WTC11 (cell line): ENCODE measurements at regions of chr11 and their contacts with region 1.

Region 1: GRCh38 chr11:62081378-62082291 is 42.2 kb upstream of the INCENP start:
- DNase-seq: peak; percentile 89
- ATAC-seq: peak; percentile 89
- H3K4me3 Mint-ChIP-seq: no peak overlapping the region
- H3K27ac Mint-ChIP-seq: no peak overlapping the region
- H3K4me1 Mint-ChIP-seq: no peaks in the 10 kb centered on the region; the same call in 1 of the 2 replicates
- H3K27me3 Mint-ChIP-seq: no peaks in the 10 kb centered on the region; the same call in 1 of the 2 replicates
- CTCF ChIP-seq: peak; percentile 84

Region 2: GRCh38 chr11:61816736-61817455 is 264.7 kb before region 1 on chr11 and contains the start of gene FADS1:
- CTCF ChIA-PET with region 1: interaction called, 18 read pairs
- POLR2A ChIA-PET with region 1: no interaction called
- DNase-seq: peak; percentile 90
- ATAC-seq: peak; percentile 32
- H3K4me3 Mint-ChIP-seq: peak within 1 kb of the TSS; percentile 94
- H3K27ac Mint-ChIP-seq: peak within 1 kb of the TSS; percentile 99
- H3K4me1 Mint-ChIP-seq: peaks cover 23% of the 10 kb centered on the region
- H3K27me3 Mint-ChIP-seq: no peaks in the 10 kb centered on the region; the same call in 1 of the 2 replicates
- CTCF ChIP-seq: no peak
- total RNA-seq, gene FADS1: 105 to 108 TPM (median 105 TPM) in 3 replicates

Region 3: DNA sequence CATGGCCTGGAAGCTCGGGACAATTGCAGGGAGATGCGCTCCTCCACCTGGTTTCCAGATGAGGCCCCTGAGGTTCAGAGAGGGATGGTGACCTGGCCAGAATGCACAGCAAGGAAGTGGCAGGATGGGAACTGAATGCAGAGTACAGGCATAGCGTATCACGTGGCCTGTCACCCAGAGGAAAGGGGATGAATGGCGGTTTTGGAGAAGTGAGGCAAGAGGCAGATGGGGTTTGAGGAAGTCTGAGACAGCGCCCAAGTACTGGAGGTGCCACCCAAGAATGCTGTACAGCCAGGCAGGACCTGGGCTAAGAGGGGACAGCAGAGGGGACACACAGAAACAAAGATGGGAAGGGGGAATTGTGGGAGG is 169.1 kb before region 1 on chr11:
- CTCF ChIA-PET with region 1: interaction called, 27 read pairs
- POLR2A ChIA-PET with region 1: no interaction called
- DNase-seq: peak; percentile 2
- ATAC-seq: no peak
- H3K4me3 Mint-ChIP-seq: no peak overlapping the region
- H3K27ac Mint-ChIP-seq: no peak overlapping the region; the same call in 1 of the 2 replicates
- H3K4me1 Mint-ChIP-seq: peaks cover 19% of the 10 kb centered on the region
- H3K27me3 Mint-ChIP-seq: peaks cover 17% of the 10 kb centered on the region
- CTCF ChIP-seq: no peak

Region 4: DNA sequence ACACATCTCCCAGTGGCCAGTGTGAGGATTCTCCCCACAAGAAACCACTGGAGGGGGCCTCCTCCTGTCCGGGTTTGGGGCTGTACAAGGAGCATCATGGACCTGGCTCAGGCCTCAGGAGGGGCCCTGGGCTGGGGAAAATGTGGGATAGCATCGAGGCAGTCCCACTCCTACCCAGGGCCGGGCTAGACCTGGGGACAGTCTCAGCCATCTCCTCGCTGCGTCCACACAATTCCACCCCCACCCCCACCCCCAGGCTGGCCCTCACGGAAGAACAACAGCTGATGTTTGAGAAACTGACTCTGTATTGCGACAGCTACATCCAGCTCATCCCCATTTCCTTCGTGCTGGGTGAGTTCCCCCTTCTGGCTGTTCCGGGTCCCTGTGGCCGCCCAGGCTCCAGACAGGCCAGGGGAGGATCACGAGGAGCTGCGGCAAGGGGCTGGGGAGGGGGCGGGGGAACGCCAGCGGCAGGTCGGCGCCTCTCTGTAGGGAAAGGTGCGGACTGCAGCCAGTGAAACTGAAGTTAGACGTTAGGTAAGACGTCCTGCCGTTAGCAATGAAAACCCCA is 126.7 kb before region 1 on chr11:
- CTCF ChIA-PET with region 1: interaction called, 152 read pairs
- POLR2A ChIA-PET with region 1: interaction called, 5 read pairs
- DNase-seq: peak; percentile 65
- ATAC-seq: peak; percentile 54
- H3K4me3 Mint-ChIP-seq: peak overlapping the region; percentile 56
- H3K27ac Mint-ChIP-seq: no peak overlapping the region
- H3K4me1 Mint-ChIP-seq: peaks cover 5% of the 10 kb centered on the region; the same call in 1 of the 2 replicates
- H3K27me3 Mint-ChIP-seq: peaks cover 26% of the 10 kb centered on the region
- CTCF ChIP-seq: no peak

Region 5: GRCh38 chr11:61980783-61981541 is 100.7 kb before region 1 on chr11:
- CTCF ChIA-PET with region 1: interaction called, 15 read pairs
- POLR2A ChIA-PET with region 1: no interaction called
- DNase-seq: no peak
- ATAC-seq: peak; percentile 25; the same call in 1 of the 2 replicates
- H3K4me3 Mint-ChIP-seq: no peak overlapping the region
- H3K27ac Mint-ChIP-seq: 0 out of 2 replicates have a peak overlapping the region, but pooled peaks have one; percentile 10
- H3K4me1 Mint-ChIP-seq: peaks cover 20% of the 10 kb centered on the region
- H3K27me3 Mint-ChIP-seq: peaks cover 54% of the 10 kb centered on the region
- CTCF ChIP-seq: no peak

Region 6: GRCh38 chr11:62069986-62070919 is 11.4 kb before region 1 on chr11:
- CTCF ChIA-PET with region 1: interaction called, 32 read pairs
- POLR2A ChIA-PET with region 1: no interaction called
- DNase-seq: no peak
- ATAC-seq: no peak
- H3K4me3 Mint-ChIP-seq: no peak overlapping the region
- H3K27ac Mint-ChIP-seq: no peak overlapping the region
- H3K4me1 Mint-ChIP-seq: no peaks in the 10 kb centered on the region
- H3K27me3 Mint-ChIP-seq: no peaks in the 10 kb centered on the region; the same call in 1 of the 2 replicates
- CTCF ChIP-seq: no peak